H1 (cell line): ENCODE measurements at regions of chr17 and their contacts with region 1.

Region 1: DNA sequence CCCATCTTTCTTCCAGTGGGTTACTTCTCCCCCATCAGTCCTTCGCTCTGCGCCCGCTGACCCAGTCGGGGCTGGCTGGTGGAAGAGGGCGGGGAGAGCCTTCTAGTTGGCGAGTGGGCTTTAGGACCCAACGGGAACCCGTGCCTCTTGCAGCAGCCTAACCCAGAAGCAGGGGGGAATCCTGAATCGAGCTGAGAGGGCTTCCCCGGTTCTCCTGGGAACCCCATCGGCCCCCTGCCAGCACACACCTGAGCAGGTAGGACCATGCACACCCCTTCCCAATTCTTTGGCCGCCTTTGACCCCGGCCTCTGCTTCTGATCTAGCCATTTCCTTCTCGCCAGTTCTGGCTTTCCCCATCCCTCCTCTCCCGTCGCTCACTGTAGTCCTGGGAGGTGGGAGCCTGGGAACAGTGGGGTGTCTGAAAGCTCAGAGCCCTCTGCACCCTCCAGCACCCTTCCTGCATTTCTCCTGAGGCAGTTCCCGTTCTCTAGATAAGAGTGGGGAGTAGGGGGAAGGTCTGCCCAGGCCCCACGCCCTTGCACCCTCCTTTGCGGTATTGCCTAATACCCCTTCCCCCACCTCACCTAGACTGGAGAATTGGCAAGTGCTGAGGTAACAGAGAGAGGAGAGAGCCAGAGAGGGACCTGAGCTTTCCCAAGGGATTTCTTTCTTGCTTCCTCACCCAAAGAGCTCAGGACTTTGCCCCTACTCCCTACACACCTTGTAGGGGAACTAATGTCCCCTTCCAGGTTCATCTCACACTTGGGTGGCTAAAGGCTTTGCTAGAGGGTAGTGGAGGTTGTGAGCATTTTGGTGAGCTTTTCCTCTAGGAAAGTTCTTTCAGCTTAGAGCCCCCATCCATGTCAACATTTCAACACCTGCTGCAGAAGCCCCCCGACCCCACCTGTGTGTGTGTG is at the start of gene RARA:
- DNase-seq: peak in 1 of 2 experiments; percentile 86
- H3K4me3 ChIP-seq: peak within 1 kb of the TSS; percentile 65 to 92 (median 80)
- H3K27ac ChIP-seq: no peak within 1 kb of the TSS
- H3K4me1 ChIP-seq: peaks cover 15 to 38% (median 27%) of the 10 kb centered on the region in 4 experiments
- H3K27me3 ChIP-seq: no peaks in the 10 kb centered on the region; a peak in 1 of 7 replicates
- CTCF ChIP-seq: no peak; a peak in 1 of 4 replicates
- EP300 ChIP-seq: no peak
- POLR2A ChIP-seq: 0 out of 3 replicates have a peak, but pooled peaks of 1 of the 2 experiments have one; percentile 47
- RAD21 ChIP-seq: peak in 1 of 2 experiments; percentile 12; a peak in 1 of 4 replicates
- total RNA-seq, gene RARA: 13.4 and 16.5 TPM in 2 replicates

Region 2: DNA sequence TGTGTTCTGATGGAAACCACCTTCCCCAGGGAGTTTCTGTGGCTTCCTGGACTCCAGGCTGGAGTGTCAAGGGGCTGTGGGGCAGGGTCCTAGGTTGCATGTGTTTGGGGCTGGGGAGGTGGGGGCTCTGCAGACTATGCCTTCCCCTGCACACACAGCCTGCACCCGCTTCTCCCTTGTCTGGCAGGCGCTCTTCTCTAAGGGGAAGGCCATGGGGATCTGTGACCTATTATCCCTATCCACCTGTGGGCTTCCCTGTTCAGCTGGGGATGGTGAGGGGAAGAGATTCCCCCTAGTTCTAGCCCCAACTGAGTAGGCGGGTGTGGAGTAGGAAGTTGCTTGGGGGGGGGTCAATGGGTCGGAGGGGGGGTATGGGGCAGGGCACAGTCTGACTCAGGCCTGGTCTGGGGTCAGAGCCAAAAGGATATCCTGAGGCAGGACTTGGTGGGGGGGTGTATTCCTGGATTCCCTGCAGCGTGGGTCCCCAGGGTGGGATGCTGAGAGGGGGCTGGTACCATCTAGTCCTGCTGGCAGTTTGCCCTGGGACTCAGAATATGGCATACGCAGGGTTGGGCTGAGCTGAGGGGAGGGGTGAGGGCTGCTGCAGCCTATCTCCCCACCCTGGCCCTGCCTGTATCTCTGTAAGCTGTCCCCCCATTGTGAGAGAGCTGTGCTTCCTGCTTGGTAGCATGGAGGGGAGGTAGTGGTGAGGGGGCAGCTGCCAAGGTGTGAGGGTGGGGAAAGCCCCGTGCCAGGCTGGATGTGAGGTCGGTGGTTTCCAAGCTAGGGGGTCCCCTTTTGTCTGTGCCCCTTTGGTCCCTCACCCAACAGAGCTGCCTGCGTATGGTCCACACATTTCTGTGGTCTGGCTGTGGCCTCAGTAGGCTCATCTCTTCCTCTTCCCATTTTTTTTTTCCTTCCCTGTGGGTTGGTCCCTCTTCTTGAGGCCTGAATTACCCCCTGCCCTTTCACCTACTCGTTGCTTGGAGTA is 14.4 kb after region 1 on chr17:
- CTCF ChIA-PET with region 1: interaction called, 9 read pairs
- POLR2A ChIA-PET with region 1: interaction called, 540 read pairs
- DNase-seq: no peak
- H3K4me3 ChIP-seq: no peak overlapping the region
- H3K27ac ChIP-seq: no peak overlapping the region
- H3K4me1 ChIP-seq: peaks cover 0 to 22% (median 15%) of the 10 kb centered on the region in 4 experiments; a peak in 6 of 7 replicates
- H3K27me3 ChIP-seq: peaks cover 0 to 11% (median 5%) of the 10 kb centered on the region in 4 experiments; a peak in 5 of 7 replicates
- CTCF ChIP-seq: no peak
- EP300 ChIP-seq: no peak
- POLR2A ChIP-seq: no peak
- RAD21 ChIP-seq: no peak

Region 3: DNA sequence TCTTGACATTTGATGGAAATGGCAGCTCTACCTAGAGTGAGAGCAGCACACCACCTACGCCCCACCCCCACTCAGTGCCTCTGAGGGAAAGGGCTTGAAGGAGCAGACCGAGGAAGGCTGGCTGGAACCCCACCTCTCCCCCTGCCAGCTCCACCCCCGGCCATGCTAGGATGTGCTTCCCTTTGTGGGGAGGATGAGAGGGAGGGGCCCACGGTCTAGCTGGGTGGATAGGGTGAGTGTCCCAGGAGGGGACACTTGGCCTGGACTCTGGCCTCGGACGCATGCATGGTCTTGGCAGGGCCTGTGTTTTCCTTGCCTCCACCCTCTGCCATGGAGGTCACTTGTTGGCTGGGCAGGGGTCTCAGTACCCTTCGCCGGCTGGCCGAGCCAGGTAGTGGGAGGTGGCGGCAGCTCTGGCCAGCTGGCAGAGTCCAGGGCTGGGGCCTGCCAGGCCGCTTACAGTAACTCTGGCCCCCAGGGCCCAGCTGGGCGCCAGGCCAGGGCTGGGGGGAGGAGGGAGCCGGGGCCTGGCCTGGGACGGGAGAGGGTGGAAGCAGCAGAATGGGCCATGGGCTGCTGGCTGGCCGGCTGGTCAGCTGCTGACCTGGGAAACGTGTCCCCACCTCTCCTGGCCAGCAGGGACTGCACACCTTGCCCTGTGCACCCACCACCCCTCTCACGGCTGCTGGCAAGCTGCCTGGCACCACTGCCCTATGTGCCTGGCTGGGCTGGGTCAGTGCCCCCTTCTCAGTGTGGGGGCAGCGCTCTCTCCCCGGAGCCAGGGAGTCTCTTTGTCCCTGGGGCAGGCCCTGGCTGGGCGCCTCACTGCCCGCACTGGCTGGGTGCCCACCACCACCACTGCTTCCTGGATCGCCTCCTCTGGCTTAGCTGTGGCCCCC is 22.7 kb after region 1 on chr17:
- CTCF ChIA-PET with region 1: interaction called, 75 read pairs
- POLR2A ChIA-PET with region 1: interaction called, 22 read pairs
- DNase-seq: no peak
- H3K4me3 ChIP-seq: no peak overlapping the region
- H3K27ac ChIP-seq: no peak overlapping the region
- H3K4me1 ChIP-seq: peaks cover 0 to 4% (median 1%) of the 10 kb centered on the region in 4 experiments; a peak in 3 of 7 replicates
- H3K27me3 ChIP-seq: peaks cover 0 to 10% (median 2%) of the 10 kb centered on the region in 4 experiments; a peak in 4 of 7 replicates
- CTCF ChIP-seq: no peak
- EP300 ChIP-seq: no peak
- POLR2A ChIP-seq: no peak
- RAD21 ChIP-seq: no peak

Region 4: GRCh38 chr17:40461732-40462342 is 152.5 kb after region 1 on chr17:
- CTCF ChIA-PET with region 1: no interaction called
- POLR2A ChIA-PET with region 1: no interaction called
- DNase-seq: no peak
- H3K4me3 ChIP-seq: no peak overlapping the region
- H3K27ac ChIP-seq: no peak overlapping the region
- H3K4me1 ChIP-seq: peaks cover 2 to 39% (median 16%) of the 10 kb centered on the region in 4 experiments
- H3K27me3 ChIP-seq: no peaks in the 10 kb centered on the region
- CTCF ChIP-seq: no peak
- EP300 ChIP-seq: no peak
- POLR2A ChIP-seq: no peak
- RAD21 ChIP-seq: no peak